B cell (primary cell): ENCODE measurements at regions of chr11 and their contacts with region 1.

Region 1: DNA sequence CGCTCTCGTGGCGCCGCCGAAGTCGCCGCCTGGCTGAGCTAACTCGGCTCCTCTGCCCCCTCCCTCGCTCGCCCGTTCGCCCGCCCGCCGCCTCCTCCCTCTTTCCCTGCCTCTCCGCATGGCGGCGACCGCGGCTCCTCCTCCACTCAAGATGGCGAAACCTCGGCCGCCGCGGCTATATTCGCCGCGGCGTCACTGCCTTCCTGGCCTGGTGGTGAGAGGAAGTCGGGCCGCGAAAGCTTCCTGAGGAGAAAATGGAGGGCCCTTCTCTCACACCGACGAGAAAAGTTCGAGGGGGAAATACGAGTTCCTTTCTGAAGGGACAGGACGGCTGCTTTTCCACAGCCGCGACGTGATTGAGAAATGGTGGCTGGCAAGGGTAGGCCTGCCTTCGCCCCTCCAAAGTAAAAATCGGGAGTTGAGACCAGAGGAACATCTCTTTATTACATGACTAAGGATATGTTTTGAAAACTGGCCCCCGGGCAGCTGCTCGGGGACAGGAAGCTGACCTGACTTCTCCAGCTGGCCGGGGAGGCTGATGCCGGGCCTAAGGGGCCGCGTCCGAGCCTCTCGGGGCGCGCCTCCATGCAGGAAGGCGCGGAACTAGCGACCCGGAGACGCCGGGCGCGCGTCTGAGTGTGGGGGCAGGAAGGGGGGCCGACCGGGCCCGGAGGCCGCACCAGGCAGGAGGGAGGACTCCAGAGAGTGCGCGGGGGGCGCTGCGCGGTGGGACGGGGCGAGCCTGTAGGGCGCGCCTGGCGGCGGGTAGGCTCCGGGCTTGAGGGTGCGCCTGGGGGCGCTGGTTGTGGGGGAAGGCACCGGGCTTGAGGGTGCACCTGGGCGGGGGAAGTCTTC is at the start of gene DDX6:
- DNase-seq: peak; percentile 93
- ATAC-seq: peak; percentile 59
- H3K4me3 ChIP-seq: peak within 1 kb of the TSS; percentile 74 to 97 (median 94)
- H3K4me3 Mint-ChIP-seq: peak within 1 kb of the TSS; percentile 100
- H3K27ac ChIP-seq: peak within 1 kb of the TSS; percentile 98 to 100
- H3K27ac Mint-ChIP-seq: peak within 1 kb of the TSS; percentile 100
- H3K4me1 ChIP-seq: peaks cover 35 to 47% of the 10 kb centered on the region in 2 donors
- H3K4me1 Mint-ChIP-seq: peaks cover 32% of the 10 kb centered on the region
- H3K27me3 ChIP-seq: no peaks in the 10 kb centered on the region
- H3K27me3 Mint-ChIP-seq: no peaks in the 10 kb centered on the region
- CTCF ChIP-seq: no peak
- total RNA-seq, gene DDX6: 255 and 256 TPM in 2 replicates

Region 2: DNA sequence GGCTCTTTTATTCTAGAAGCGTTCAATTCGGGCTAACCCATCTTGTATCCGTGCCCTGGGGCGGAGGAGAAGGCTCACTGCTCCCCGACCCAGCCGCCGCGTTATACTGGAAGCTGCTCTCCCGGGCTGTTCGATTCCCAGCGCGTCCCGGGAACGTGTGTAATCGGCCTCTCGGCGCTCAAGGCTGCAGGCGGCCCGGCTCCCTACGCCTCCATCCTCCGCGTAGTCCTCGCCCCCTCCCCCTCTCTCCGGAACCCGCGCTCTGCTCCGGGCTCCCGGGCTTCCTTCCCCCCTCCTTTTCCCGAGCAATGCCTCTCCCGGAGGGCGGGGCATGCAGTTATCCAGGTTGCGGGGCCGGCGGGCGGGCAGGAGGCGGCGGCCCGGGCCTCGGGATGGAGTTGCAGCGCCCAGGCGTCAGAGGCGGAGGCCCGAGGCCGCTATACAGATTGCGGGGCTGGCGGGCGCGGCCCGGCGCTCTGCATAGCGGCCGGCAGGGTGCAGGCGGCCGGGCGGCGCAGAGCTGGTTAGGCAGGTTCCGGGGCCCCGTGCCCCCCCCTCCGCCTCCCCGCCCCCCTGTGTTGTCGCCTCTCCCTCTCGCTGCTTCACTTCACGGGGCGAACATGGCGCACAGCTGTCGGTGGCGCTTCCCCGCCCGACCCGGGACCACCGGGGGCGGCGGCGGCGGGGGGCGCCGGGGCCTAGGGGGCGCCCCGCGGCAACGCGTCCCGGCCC is 355.3 kb before region 1 on chr11 and contains the start of gene KMT2A:
- CTCF ChIA-PET with region 1: no interaction called
- POLR2A ChIA-PET with region 1: no interaction called
- intact Hi-C with region 1: loop called (anchors 5 kb)
- DNase-seq: peak; percentile 98
- ATAC-seq: peak; percentile 67
- H3K4me3 ChIP-seq: peak within 1 kb of the TSS; percentile 80 to 93 (median 87)
- H3K4me3 Mint-ChIP-seq: peak within 1 kb of the TSS; percentile 97
- H3K27ac ChIP-seq: peak within 1 kb of the TSS; percentile 83 to 94
- H3K27ac Mint-ChIP-seq: peak within 1 kb of the TSS; percentile 99
- H3K4me1 ChIP-seq: peaks cover 24 to 31% of the 10 kb centered on the region in 2 donors
- H3K4me1 Mint-ChIP-seq: peaks cover 42% of the 10 kb centered on the region
- H3K27me3 ChIP-seq: no peaks in the 10 kb centered on the region
- H3K27me3 Mint-ChIP-seq: no peaks in the 10 kb centered on the region
- CTCF ChIP-seq: no peak
- total RNA-seq, gene KMT2A: 175 and 198 TPM in 2 replicates

Region 3: DNA sequence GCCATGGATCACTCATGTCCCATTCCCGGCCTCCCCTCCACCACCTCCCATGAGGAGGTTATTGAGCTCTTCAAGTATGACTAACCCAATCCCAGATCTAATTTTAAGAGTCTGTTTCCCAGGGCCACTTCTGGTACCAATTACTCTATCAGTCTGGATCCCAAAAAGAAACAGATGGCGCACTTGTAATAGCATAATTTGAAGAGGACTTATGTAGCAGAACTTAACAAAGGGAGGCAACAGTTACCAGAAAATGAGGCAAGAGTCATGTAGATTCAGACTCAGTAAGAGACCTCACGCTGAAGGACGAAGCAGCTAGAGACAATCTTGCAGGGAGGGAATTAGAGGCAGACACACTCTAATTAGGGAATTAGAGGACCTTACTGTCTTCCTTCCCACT is 47.3 kb before region 1 on chr11:
- CTCF ChIA-PET with region 1: no interaction called
- POLR2A ChIA-PET with region 1: no interaction called
- intact Hi-C with region 1: no loop called
- DNase-seq: no peak
- ATAC-seq: no peak
- H3K4me3 ChIP-seq: no peak overlapping the region
- H3K4me3 Mint-ChIP-seq: no peak overlapping the region
- H3K27ac ChIP-seq: no peak overlapping the region
- H3K27ac Mint-ChIP-seq: peak overlapping the region; percentile 47
- H3K4me1 ChIP-seq: no peaks in the 10 kb centered on the region
- H3K4me1 Mint-ChIP-seq: peaks cover 2% of the 10 kb centered on the region
- H3K27me3 ChIP-seq: no peaks in the 10 kb centered on the region
- H3K27me3 Mint-ChIP-seq: no peaks in the 10 kb centered on the region
- CTCF ChIP-seq: no peak

Region 4: DNA sequence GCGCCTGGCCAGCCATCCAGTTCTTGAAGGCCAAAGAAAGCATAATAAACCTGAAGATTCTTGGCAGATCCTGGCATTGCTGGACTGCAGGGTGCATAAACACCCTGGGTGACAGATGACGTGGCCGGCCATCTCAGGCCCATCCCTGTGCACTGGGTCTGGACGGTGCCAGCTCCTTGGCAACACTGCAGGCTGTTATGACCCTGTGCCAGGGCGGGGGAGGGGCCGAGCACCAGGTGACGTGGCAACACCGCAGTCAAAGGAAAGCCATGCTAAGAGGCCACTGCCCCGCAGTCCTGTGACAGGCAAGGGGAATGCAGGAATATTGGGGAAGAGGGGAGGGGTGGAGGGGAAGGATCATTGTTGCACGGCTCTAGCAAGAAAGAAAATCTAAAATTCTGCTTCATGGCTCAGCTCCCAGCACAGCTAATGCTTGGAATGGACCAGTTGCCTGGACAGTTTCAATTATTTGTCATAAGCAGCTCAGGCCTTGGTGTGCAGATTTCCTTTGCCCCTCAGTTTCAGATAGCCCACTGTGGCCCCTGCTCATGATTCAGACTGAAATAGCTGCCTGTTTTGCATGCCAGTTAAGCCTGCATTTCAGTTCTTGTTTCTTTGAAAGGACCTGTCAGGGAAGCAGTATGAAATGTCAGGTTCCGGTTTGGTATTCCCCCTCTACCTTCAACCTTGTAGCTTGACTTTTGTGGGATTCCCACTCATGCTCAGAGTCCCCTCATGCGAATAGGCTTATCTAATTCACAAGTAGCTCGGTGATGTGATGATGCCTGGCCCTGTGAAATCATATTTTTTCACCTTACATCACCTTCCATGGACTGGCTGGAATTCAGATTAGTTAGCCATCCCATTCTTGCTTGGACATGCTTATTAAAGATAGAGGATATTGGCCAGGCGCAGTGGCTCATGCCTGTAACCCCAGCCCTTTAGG is 29.3 kb after region 1 on chr11:
- CTCF ChIA-PET with region 1: interaction called, 119 read pairs
- POLR2A ChIA-PET with region 1: interaction called, 90 read pairs
- intact Hi-C with region 1: loop called (anchors 1 kb)
- DNase-seq: peak; percentile 93
- ATAC-seq: peak; percentile 86
- H3K4me3 ChIP-seq: peak overlapping the region in 4 of 5 experiments; percentile 5 to 39 (median 21)
- H3K4me3 Mint-ChIP-seq: peak overlapping the region; percentile 77
- H3K27ac ChIP-seq: peak overlapping the region; percentile 95 to 99
- H3K27ac Mint-ChIP-seq: peak overlapping the region; percentile 98
- H3K4me1 ChIP-seq: peaks cover 67% of the 10 kb centered on the region in 2 donors
- H3K4me1 Mint-ChIP-seq: peaks cover 58% of the 10 kb centered on the region
- H3K27me3 ChIP-seq: no peaks in the 10 kb centered on the region
- H3K27me3 Mint-ChIP-seq: no peaks in the 10 kb centered on the region
- CTCF ChIP-seq: no peak

Region 5: GRCh38 chr11:118878163-118878563 is 86.8 kb after region 1 on chr11:
- CTCF ChIA-PET with region 1: interaction called, 109 read pairs
- POLR2A ChIA-PET with region 1: interaction called, 97 read pairs
- intact Hi-C with region 1: loop called (anchors 1 kb)
- DNase-seq: peak; percentile 31
- ATAC-seq: no peak
- H3K4me3 ChIP-seq: no peak overlapping the region
- H3K4me3 Mint-ChIP-seq: no peak overlapping the region
- H3K27ac ChIP-seq: peak overlapping the region; percentile 79 to 93
- H3K27ac Mint-ChIP-seq: peak overlapping the region; percentile 72
- H3K4me1 ChIP-seq: peaks cover 67% of the 10 kb centered on the region in 2 donors
- H3K4me1 Mint-ChIP-seq: peaks cover 75% of the 10 kb centered on the region
- H3K27me3 ChIP-seq: no peaks in the 10 kb centered on the region
- H3K27me3 Mint-ChIP-seq: no peaks in the 10 kb centered on the region
- CTCF ChIP-seq: no peak

Region 6: GRCh38 chr11:118895142-118896039 is 104.1 kb after region 1 on chr11:
- CTCF ChIA-PET with region 1: interaction called, 85 read pairs
- POLR2A ChIA-PET with region 1: interaction called, 74 read pairs
- intact Hi-C with region 1: no loop called
- DNase-seq: peak; percentile 91
- ATAC-seq: peak; percentile 59
- H3K4me3 ChIP-seq: peak overlapping the region in 4 of 5 experiments; percentile 28 to 51 (median 44)
- H3K4me3 Mint-ChIP-seq: peak overlapping the region; percentile 79
- H3K27ac ChIP-seq: peak overlapping the region; percentile 95 to 99
- H3K27ac Mint-ChIP-seq: peak overlapping the region; percentile 86
- H3K4me1 ChIP-seq: peaks cover 73 to 83% of the 10 kb centered on the region in 2 donors
- H3K4me1 Mint-ChIP-seq: peaks cover 83% of the 10 kb centered on the region
- H3K27me3 ChIP-seq: no peaks in the 10 kb centered on the region
- H3K27me3 Mint-ChIP-seq: no peaks in the 10 kb centered on the region
- CTCF ChIP-seq: no peak

Region 7: DNA sequence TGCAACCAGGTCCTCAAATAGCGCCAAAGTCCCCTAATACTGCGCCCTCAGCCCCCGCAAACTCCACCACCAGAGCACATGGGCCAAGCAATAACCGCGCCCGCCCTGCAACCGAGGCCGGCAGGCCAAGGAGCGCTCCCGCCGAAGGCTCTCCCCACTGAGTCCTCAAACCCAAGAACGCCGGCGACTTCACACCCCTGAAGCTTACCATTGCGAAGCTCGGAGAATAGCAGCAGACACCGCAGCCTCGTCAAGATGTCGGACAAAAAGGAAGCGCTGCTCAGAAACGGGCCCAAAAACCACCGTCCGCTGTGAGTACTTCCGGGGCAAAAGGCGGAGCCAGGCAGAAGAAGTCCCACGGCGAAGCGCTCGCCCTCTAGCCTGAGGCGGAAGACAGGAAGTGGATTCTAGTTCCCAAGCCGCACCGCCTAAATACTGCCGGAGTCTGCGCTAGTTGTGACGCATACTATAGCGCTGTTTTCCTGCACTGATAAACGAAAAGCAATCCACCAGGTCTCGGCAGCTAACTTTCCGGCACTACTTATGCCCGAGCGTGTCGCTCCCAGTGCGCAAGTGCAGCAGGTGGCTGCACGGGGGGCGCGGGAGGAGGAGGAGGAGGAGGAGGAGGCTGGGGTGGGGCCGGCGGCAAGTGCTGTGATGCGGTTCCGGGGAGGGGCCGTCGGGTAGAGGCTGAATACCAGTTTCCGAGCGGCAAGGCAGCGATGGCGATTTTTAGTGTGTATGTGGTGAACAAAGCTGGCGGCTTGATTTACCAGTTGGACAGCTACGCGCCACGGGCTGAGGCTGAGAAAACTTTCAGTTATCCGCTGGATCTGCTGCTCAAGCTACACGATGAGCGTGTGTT is 227.0 kb after region 1 on chr11 and contains the starts of genes RPS25 and TRAPPC4:
- CTCF ChIA-PET with region 1: no interaction called
- POLR2A ChIA-PET with region 1: interaction called, 3 read pairs
- intact Hi-C with region 1: loop called (anchors 5 kb)
- DNase-seq: peak; percentile 98
- ATAC-seq: peak; percentile 91
- H3K4me3 ChIP-seq: peak within 1 kb of the TSS; percentile 85 to 98 (median 93)
- H3K4me3 Mint-ChIP-seq: peak within 1 kb of the TSS; percentile 100
- H3K27ac ChIP-seq: peak within 1 kb of the TSS; percentile 91 to 92
- H3K27ac Mint-ChIP-seq: peak within 1 kb of the TSS; percentile 100
- H3K4me1 ChIP-seq: peaks cover 27 to 34% of the 10 kb centered on the region in 2 donors
- H3K4me1 Mint-ChIP-seq: peaks cover 46% of the 10 kb centered on the region
- H3K27me3 ChIP-seq: no peaks in the 10 kb centered on the region
- H3K27me3 Mint-ChIP-seq: no peaks in the 10 kb centered on the region
- CTCF ChIP-seq: no peak
- total RNA-seq, gene RPS25: 1,713 and 1,823 TPM in 2 replicates
- total RNA-seq, gene TRAPPC4: 61.5 and 64.5 TPM in 2 replicates